ENCODE measurements at regions of chr15 and their contacts with region 1.

Region 1: GRCh38 chr15:92819278-92820235 is 80.6 kb upstream of the CHD2 start:
- DNase-seq: no peak
- H3K4me3 ChIP-seq: peak overlapping the region in 3 of 4 donors; percentile 17 to 45 (median 25)
- H3K27ac ChIP-seq: peak overlapping the region; percentile 85 to 92 (median 88)
- H3K4me1 ChIP-seq: peaks cover 4 to 62% (median 39%) of the 10 kb centered on the region in 4 donors
- H3K27me3 ChIP-seq: no peaks in the 10 kb centered on the region
- CTCF ChIP-seq: no peak
- EP300 ChIP-seq: no peak
- POLR2A ChIP-seq: no peak

Region 2: GRCh38 chr15:92763459-92763858 is 56.1 kb before region 1 on chr15:
- in situ Hi-C with region 1: no loop called
- intact Hi-C with region 1: no loop called
- DNase-seq: no peak
- H3K4me3 ChIP-seq: no peak overlapping the region
- H3K27ac ChIP-seq: no peak overlapping the region
- H3K4me1 ChIP-seq: no peaks in the 10 kb centered on the region
- H3K27me3 ChIP-seq: no peaks in the 10 kb centered on the region
- CTCF ChIP-seq: no peak
- EP300 ChIP-seq: no peak
- POLR2A ChIP-seq: no peak

Region 3: GRCh38 chr15:92803847-92804609 is 15.5 kb before region 1 on chr15:
- in situ Hi-C with region 1: no loop called
- intact Hi-C with region 1: no loop called
- DNase-seq: peak; percentile 79
- H3K4me3 ChIP-seq: no peak overlapping the region
- H3K27ac ChIP-seq: peak overlapping the region; percentile 85 to 98 (median 87)
- H3K4me1 ChIP-seq: peaks cover 16 to 62% (median 30%) of the 10 kb centered on the region in 4 donors
- H3K27me3 ChIP-seq: no peaks in the 10 kb centered on the region
- CTCF ChIP-seq: no peak
- EP300 ChIP-seq: peak; percentile 90
- POLR2A ChIP-seq: peak; percentile 22

Region 4: DNA sequence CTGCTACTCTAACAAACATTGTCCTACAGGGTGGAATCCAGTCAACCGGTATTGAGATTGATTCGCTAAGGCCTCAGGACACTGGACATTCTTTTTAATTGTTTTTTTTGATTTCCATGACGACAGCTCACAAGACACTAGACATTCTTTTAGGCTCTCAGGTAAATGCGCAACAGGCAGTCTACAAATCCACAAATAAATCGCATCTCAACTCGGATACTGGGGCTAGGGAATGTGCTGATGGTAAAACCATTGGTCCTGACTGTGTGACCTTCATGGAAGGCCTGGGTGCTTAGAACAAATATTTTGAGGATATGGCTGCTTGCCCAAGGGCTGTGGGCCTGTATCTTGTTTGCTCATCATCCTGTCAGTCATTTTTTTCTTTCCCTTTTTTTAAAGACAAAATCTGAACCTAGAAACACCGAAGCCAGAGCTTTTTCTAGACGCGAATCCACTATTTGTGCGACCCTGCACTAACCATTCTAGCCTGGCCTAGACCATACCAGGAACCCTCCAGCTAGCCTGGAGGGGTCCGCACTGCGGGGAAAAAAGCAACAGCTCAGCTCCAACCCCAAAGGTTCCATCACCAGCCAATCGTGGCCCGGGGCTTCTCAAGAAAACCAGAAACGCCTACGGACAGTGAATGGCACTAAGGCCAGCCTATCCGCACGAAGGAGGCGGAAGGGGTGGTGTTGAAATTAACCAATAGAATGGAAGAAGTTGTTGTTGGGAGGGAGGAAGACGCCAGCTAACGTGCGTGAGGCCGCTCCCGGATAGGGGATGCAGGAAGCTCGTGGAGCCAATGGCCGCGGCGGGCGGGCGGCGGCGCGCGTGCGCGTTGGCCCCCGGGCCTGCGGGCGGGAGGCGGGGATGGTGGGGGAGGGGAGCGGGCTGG is 62.5 kb after region 1 on chr15:
- in situ Hi-C with region 1: loop called in 2 of 4 experiments (anchors 5 to 10 kb)
- intact Hi-C with region 1: loop called (anchors 5 kb)
- DNase-seq: peak; percentile 99
- H3K4me3 ChIP-seq: peak overlapping the region; percentile 23 to 100 (median 92)
- H3K27ac ChIP-seq: peak overlapping the region; percentile 98 to 100 (median 100)
- H3K4me1 ChIP-seq: peaks cover 19 to 56% (median 35%) of the 10 kb centered on the region in 4 donors
- H3K27me3 ChIP-seq: no peaks in the 10 kb centered on the region
- CTCF ChIP-seq: peak in 1 of 5 experiments; percentile 18
- EP300 ChIP-seq: no peak
- POLR2A ChIP-seq: peak; percentile 96

Measured in transverse colon (tissue), 4 donors.